ACHN (cell line): ENCODE measurements at regions of chr1 and their contacts with region 1.

Region 1: GRCh38 chr1:151909150-151910149 is at the start of gene THEM4:
- DNase-seq: peak; percentile 98

Region 2: DNA sequence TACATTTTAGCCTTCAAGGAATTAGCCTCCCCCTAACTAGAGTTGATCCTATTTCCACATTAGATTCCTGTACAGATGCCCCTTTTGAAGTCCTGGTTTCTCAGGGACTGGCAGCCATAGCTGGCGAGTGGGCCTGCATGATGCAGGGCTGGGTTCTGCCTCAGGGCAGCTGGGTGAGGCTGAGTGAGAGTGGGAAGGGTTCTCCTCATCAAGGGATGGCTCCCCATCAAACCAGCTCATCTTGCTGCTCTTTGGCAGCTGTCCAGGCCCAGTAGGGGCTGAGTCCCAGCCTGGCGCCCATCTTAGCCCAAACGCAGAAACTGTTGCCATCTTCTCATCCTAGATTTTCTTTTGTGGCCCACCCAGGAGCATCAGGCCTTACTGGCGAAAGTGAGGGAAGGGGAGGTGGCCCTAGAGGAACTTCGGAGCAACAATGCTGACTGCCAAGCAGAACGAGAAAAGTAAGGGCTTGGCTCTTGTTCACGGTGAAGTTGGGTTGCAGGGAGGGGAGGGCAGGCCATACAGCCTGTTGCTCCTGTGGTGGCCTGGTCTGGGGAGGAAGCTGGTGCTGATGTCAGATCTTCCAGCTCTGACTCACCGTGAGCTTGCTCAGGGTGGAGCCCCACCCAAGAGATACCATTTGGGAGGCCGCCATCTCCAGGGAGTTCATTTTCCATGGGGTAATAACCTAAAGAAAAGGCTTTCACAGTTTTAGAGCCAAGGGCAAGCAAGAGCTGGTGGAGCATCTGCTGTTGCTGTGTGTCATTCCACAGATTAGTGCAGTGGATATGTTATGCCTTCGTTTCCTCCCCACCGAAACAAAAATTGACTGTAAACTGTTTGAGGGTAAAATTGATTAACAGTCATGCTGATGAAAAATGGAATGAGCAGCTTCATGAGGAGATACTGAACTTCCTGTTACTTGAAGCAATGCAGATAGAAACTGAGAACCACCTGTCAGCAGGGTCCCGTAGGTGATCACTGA is 334.6 kb before region 1 on chr1:
- in situ Hi-C with region 1: no loop called
- DNase-seq: no peak

Region 3: DNA sequence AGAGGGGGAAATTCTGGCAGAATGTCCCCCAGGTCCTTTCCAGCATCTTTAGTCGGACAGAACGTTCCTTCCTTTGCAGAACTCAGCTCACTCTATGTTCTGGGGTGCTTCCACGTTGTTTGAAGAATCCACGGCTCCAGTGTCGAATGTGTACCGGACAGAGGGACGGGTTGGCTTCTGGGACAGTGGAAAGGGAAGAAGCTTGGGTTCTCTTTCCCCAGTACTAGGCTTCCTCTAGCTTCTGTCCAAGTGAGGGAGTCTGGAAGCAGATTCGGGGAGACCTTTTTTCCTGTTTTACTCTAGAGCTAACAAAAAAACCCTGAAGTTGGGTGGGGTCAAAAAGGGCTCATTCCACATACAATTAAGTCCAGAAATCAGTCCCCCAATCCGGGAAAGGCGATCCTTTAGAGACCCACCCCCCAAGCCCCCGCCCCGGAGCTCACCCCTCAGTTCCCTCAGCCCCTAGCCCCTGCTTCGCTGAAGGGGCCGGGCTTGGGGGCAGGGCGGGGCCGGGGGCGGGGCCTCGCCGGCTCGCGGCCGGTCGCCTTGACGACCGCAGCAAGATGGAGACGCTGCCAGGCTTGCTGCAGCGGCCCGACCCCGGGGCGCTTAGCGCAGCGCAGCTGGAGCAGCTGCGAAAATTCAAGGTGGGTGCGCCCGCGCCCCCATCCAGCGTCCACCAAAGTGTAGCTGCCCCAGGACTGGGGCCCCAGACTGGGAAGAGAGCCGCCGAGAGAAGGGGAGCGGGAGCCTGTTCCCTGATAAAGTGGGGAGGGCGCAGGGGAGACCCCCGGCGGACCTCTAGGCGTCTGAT is 188.3 kb before region 1 on chr1 and contains the start of gene RIIAD1:
- in situ Hi-C with region 1: no loop called
- DNase-seq: peak; percentile 13

Region 4: GRCh38 chr1:151799179-151799949 is 110.1 kb before region 1 on chr1:
- in situ Hi-C with region 1: no loop called
- DNase-seq: no peak

Region 5: GRCh38 chr1:152001391-152002249 is 92.2 kb after region 1 on chr1:
- in situ Hi-C with region 1: loop called (anchors 25 kb)
- DNase-seq: peak; percentile 92